ENCODE measurements at regions of chr2 and their contacts with region 1.

Region 1: GRCh38 chr2:191521608-191522208 is 156.2 kb upstream of the NABP1 start:
- DNase-seq: peak; percentile 46
- H3K4me3 ChIP-seq: no peak overlapping the region; a peak in 1 of 4 replicates
- H3K27ac ChIP-seq: peak overlapping the region in 1 of 2 experiments; percentile 51; a peak in 1 of 4 replicates
- H3K4me1 ChIP-seq: peaks cover 0 to 5% of the 10 kb centered on the region in 2 experiments; a peak in 2 of 4 replicates
- H3K27me3 ChIP-seq: no peaks in the 10 kb centered on the region
- CTCF ChIP-seq: peak; percentile 86
- EP300 ChIP-seq: no peak
- RAD21 ChIP-seq: peak; percentile 87

Region 2: GRCh38 chr2:191165176-191165643 is 356.5 kb before region 1 on chr2:
- CTCF ChIA-PET with region 1: interaction called, 35 read pairs
- POLR2A ChIA-PET with region 1: no interaction called
- DNase-seq: peak; percentile 44
- H3K4me3 ChIP-seq: peak overlapping the region in 1 of 2 experiments; percentile 22; a peak in 1 of 4 replicates
- H3K27ac ChIP-seq: peak overlapping the region in 1 of 2 experiments; percentile 50; a peak in 1 of 4 replicates
- H3K4me1 ChIP-seq: peaks cover 8 to 20% of the 10 kb centered on the region in 2 experiments
- H3K27me3 ChIP-seq: no peaks in the 10 kb centered on the region
- CTCF ChIP-seq: peak; percentile 69
- EP300 ChIP-seq: no peak
- RAD21 ChIP-seq: peak; percentile 91

Region 3: DNA sequence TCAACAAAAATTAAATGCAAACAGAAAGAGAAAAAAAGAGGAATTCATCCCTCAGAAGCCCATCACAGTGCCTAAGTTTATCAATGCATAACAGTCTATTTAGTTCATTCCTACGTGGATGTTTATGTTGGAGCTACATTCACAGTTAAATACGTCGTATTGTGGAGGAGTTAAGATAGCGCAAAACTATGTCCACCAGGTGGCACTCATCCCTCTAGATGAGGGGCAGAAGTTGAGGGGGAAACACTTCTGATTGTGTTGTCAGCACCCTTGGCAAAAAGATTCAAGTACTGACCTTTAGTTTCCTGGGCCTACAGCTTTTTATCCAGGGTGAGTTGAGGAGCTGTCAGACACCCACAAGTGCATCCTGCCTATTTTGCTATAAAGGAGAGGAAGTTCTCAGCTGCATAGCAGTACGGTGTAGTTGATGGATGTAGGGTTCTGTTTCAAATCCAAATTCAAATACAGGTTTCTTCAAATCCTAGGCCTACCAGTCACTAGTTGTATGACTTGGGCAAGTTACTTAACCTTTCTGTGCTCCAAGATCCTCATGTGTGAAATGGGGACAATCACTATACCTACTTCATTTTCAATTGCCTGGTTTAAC is 303.3 kb before region 1 on chr2:
- CTCF ChIA-PET with region 1: interaction called, 30 read pairs
- POLR2A ChIA-PET with region 1: no interaction called
- DNase-seq: peak; percentile 48
- H3K4me3 ChIP-seq: no peak overlapping the region
- H3K27ac ChIP-seq: no peak overlapping the region
- H3K4me1 ChIP-seq: no peaks in the 10 kb centered on the region; a peak in 3 of 4 replicates
- H3K27me3 ChIP-seq: no peaks in the 10 kb centered on the region
- CTCF ChIP-seq: peak; percentile 76
- EP300 ChIP-seq: no peak
- RAD21 ChIP-seq: peak; percentile 81

Region 4: DNA sequence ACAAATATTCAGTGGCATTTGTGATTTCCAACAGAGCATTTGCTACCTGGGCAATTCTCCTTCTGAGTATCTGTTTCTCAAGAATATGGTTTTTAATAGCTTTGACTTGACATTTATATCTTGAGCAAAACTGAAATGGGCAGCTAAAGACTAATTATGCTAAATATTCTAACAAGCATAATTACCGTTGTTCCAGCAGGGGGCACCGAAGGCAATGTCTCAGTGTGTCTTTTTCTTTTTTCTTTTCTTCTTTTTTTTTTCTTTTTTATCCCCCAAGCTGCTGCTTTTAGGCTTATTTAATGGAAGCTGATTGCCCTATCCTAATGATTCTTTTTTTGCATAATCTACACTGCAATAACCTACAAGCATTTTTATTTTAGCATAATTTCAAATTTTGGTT is 17.4 kb after region 1 on chr2:
- CTCF ChIA-PET with region 1: interaction called, 15 read pairs
- POLR2A ChIA-PET with region 1: no interaction called
- DNase-seq: peak; percentile 39
- H3K4me3 ChIP-seq: no peak overlapping the region
- H3K27ac ChIP-seq: peak overlapping the region in 1 of 2 experiments; percentile 78; a peak in 2 of 4 replicates
- H3K4me1 ChIP-seq: peaks cover 0 to 17% of the 10 kb centered on the region in 2 experiments; a peak in 2 of 4 replicates
- H3K27me3 ChIP-seq: no peaks in the 10 kb centered on the region
- CTCF ChIP-seq: peak; percentile 75
- EP300 ChIP-seq: no peak
- RAD21 ChIP-seq: peak; percentile 43